ENCODE measurements at regions of chr5 and their contacts with region 1.

Region 1: GRCh38 chr5:144203750-144204596 is 33.3 kb downstream of the KCTD16 start:
- DNase-seq: peak in 1 of 2 donors; percentile 41
- ATAC-seq: peak in 5 of 8 donors; percentile 46 to 69 (median 52)
- H3K4me3 ChIP-seq: no peak overlapping the region
- H3K27ac ChIP-seq: no peak overlapping the region
- H3K4me1 ChIP-seq: peaks cover 3 to 15% (median 8%) of the 10 kb centered on the region in 9 donors
- H3K27me3 ChIP-seq: peaks cover 0 to 95% (median 65%) of the 10 kb centered on the region in 7 donors
- CTCF ChIP-seq: peak; percentile 61 to 94 (median 87)

Region 2: GRCh38 chr5:144390133-144390532 is 186.2 kb after region 1 on chr5:
- intact Hi-C with region 1: loop called in 2 of 10 experiments (anchors 5 to 10 kb)
- DNase-seq: no peak
- ATAC-seq: no peak
- H3K4me3 ChIP-seq: no peak overlapping the region
- H3K27ac ChIP-seq: no peak overlapping the region
- H3K4me1 ChIP-seq: no peaks in the 10 kb centered on the region
- H3K27me3 ChIP-seq: peaks cover 0 to 4% (median 0%) of the 10 kb centered on the region in 7 donors
- CTCF ChIP-seq: peak in 4 of 9 donors; percentile 10 to 28 (median 25)

Region 3: GRCh38 chr5:145825751-145826180 is 1621.8 kb after region 1 on chr5:
- intact Hi-C with region 1: loop called in 9 of 10 experiments (anchors 5 to 10 kb)
- DNase-seq: no peak
- ATAC-seq: peak in 1 of 8 donors; percentile 41
- H3K4me3 ChIP-seq: no peak overlapping the region
- H3K27ac ChIP-seq: no peak overlapping the region
- H3K4me1 ChIP-seq: peaks cover 0 to 14% (median 10%) of the 10 kb centered on the region in 9 donors
- H3K27me3 ChIP-seq: no peaks in the 10 kb centered on the region
- CTCF ChIP-seq: peak; percentile 29 to 91 (median 80)

Region 4: DNA sequence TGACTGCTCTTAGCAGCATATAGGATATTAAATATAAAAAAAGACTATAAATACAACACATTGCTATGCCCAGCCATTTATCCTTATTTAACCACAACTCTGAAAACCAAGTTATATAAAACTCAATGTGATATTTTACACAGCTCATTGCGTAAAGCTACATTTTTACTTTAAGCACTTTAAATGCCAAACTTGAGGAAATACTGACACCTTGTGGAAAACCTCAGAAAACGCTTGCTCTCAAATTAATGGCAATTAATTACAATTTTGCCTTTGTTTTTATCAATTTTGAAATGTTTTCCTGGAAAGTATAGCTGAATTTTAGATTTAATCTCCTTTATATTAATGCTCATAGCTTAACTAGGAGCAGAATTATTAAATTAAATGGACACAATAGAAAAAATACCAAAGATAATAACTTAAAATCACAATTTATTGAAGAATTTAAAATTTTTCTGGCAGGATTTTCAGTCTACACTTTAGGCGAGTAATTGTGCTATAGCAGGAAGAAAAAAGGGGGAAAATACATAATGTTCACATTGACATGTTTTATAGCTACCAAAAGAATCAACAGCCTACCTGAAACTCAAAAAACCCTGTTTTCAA is 1926.6 kb after region 1 on chr5:
- intact Hi-C with region 1: loop called in 1 of 10 experiments (anchors 5 kb)
- DNase-seq: no peak
- ATAC-seq: no peak
- H3K4me3 ChIP-seq: no peak overlapping the region
- H3K27ac ChIP-seq: no peak overlapping the region
- H3K4me1 ChIP-seq: no peaks in the 10 kb centered on the region
- H3K27me3 ChIP-seq: no peaks in the 10 kb centered on the region
- CTCF ChIP-seq: peak in 8 of 9 donors; percentile 34 to 78 (median 70)